ENCODE measurements at regions of chr19 and their contacts with region 1.

Region 1: DNA sequence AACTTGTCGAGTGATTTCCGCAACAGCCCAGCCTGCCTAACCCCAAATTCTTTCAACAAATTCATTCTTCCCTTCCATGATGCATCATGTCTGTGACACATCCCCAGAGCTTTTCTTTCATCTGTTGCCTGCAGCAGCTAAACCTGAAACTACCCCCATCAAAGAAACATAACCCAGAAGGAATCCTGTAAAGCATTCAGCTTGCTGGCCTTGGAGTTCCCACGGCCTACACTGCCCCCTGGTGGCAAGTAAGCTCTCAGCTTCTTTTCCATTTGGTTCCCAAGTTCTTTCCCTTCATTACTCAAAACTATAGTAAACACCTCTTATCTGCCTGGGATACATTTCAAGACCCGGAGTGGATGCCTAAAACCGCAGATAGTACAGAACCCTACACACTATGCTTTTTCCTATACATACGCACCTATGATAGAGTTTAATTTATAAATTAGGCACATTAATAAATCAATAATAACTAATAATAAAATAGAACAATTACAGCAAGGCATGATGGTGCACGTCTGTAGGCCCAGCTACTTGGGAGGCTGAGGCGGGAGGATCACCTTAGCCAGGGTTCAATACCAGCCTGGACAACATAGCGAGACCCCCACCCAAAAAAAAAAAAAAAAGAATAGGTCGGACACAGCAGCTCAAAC is 7.4 kb downstream of the ETHE1 start:
- DNase-seq: peak; percentile 64 to 85 (median 80)
- ATAC-seq: peak; percentile 97
- H3K4me3 ChIP-seq: no peak overlapping the region
- H3K4me3 Mint-ChIP-seq: peak overlapping the region in 8 of 10 donors; percentile 2 to 22 (median 6)
- H3K27ac ChIP-seq: no peak overlapping the region
- H3K27ac Mint-ChIP-seq: peak overlapping the region in 8 of 9 donors; percentile 10 to 87 (median 65)
- H3K4me1 ChIP-seq: peaks cover 4 to 5% of the 10 kb centered on the region in 2 donors
- H3K4me1 Mint-ChIP-seq: peaks cover 9 to 23% (median 18%) of the 10 kb centered on the region in 7 donors
- H3K27me3 ChIP-seq: no peaks in the 10 kb centered on the region
- H3K27me3 Mint-ChIP-seq: no peaks in the 10 kb centered on the region

Region 2: DNA sequence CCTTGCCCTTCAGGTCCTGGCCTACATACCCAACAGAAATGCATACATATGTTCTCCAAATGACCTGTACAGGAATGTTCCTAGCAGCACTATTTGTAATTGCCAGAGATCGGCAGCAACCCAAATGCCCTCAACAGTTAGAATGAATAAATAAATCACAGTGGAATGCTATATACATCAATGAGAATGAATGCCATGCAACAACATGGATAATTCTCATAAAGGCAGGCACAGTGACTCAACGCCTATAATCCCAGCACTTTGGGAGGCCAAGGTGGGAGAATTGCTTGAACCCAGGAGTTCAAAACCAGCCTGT is 86.2 kb before region 1 on chr19:
- CTCF ChIA-PET with region 1: interaction called, 102 read pairs
- POLR2A ChIA-PET with region 1: interaction called, 15 read pairs
- intact Hi-C with region 1: loop called (anchors 1 kb)
- DNase-seq: no peak
- ATAC-seq: no peak
- H3K4me3 ChIP-seq: no peak overlapping the region
- H3K4me3 Mint-ChIP-seq: peak overlapping the region in 1 of 10 donors; percentile 29
- H3K27ac ChIP-seq: no peak overlapping the region
- H3K27ac Mint-ChIP-seq: peak overlapping the region in 8 of 9 donors; percentile 10 to 89 (median 70)
- H3K4me1 ChIP-seq: peaks cover 14 to 27% of the 10 kb centered on the region in 2 donors
- H3K4me1 Mint-ChIP-seq: peaks cover 23 to 59% (median 46%) of the 10 kb centered on the region in 7 donors
- H3K27me3 ChIP-seq: no peaks in the 10 kb centered on the region
- H3K27me3 Mint-ChIP-seq: peaks cover 0 to 2% (median 0%) of the 10 kb centered on the region in 5 donors

Region 3: GRCh38 chr19:43446746-43447489 is 72.6 kb before region 1 on chr19:
- CTCF ChIA-PET with region 1: interaction called, 250 read pairs
- POLR2A ChIA-PET with region 1: interaction called, 36 read pairs
- intact Hi-C with region 1: loop called (anchors 1 kb)
- DNase-seq: peak; percentile 70 to 84 (median 78)
- ATAC-seq: peak; percentile 90
- H3K4me3 ChIP-seq: no peak overlapping the region
- H3K4me3 Mint-ChIP-seq: peak overlapping the region in 1 of 10 donors; percentile 13
- H3K27ac ChIP-seq: no peak overlapping the region
- H3K27ac Mint-ChIP-seq: peak overlapping the region in 8 of 9 donors; percentile 7 to 96 (median 86)
- H3K4me1 ChIP-seq: peaks cover 3 to 4% of the 10 kb centered on the region in 2 donors
- H3K4me1 Mint-ChIP-seq: peaks cover 23 to 46% (median 32%) of the 10 kb centered on the region in 7 donors
- H3K27me3 ChIP-seq: no peaks in the 10 kb centered on the region
- H3K27me3 Mint-ChIP-seq: peaks cover 0 to 2% (median 0%) of the 10 kb centered on the region in 5 donors

Region 4: GRCh38 chr19:43474986-43475705 is 44.4 kb before region 1 on chr19:
- CTCF ChIA-PET with region 1: interaction called, 6 read pairs
- POLR2A ChIA-PET with region 1: no interaction called
- intact Hi-C with region 1: loop called in 1 of 2 experiments (anchors 1 kb)
- DNase-seq: peak; percentile 95 to 99 (median 98)
- ATAC-seq: peak; percentile 93
- H3K4me3 ChIP-seq: peak overlapping the region; percentile 77
- H3K4me3 Mint-ChIP-seq: peak overlapping the region; percentile 75 to 93 (median 86)
- H3K27ac ChIP-seq: peak overlapping the region; percentile 92
- H3K27ac Mint-ChIP-seq: peak overlapping the region; percentile 93 to 100 (median 98)
- H3K4me1 ChIP-seq: peaks cover 9 to 30% of the 10 kb centered on the region in 2 donors
- H3K4me1 Mint-ChIP-seq: peaks cover 13 to 55% (median 41%) of the 10 kb centered on the region in 7 donors
- H3K27me3 ChIP-seq: no peaks in the 10 kb centered on the region
- H3K27me3 Mint-ChIP-seq: no peaks in the 10 kb centered on the region

Region 5: DNA sequence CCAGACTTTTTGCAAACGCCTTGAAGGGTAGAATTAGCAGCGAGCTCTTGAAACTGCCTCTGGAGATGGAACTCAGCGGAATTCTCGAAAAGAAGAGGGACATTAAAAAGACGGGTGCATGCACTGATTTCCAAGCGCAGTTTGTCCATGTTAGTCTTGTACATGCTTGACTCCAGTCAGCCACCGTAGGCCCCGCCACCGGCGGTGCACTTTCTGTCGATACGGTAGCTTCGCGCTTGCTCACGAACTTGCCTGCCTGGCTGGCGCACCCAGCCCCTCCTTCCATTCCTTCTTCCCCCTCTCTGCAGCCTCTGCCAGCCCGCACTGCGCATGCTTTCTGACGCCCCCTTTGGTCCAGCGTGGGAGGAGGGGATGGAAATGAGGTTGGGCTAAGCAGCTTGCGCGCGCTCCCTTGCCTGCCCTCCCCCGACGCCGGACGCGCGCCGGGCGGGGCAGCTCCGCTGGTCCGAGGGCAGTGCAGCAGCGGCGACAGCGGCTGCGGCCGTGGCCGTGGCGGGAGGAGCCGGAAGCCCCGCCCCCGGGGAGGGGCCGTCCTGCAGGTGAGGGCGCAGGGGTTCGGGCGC is 13.5 kb after region 1 on chr19 and contains the start of gene ZNF575:
- CTCF ChIA-PET with region 1: interaction called, 20 read pairs
- POLR2A ChIA-PET with region 1: interaction called, 8 read pairs
- intact Hi-C with region 1: no loop called
- DNase-seq: peak; percentile 61 to 91 (median 87)
- ATAC-seq: peak; percentile 64
- H3K4me3 ChIP-seq: peak within 1 kb of the TSS; percentile 98
- H3K4me3 Mint-ChIP-seq: peak within 1 kb of the TSS; percentile 88 to 98 (median 95)
- H3K27ac ChIP-seq: peak within 1 kb of the TSS; percentile 68
- H3K27ac Mint-ChIP-seq: peak within 1 kb of the TSS; percentile 90 to 98 (median 95)
- H3K4me1 ChIP-seq: peaks cover 12 to 14% of the 10 kb centered on the region in 2 donors
- H3K4me1 Mint-ChIP-seq: peaks cover 5 to 27% (median 18%) of the 10 kb centered on the region in 7 donors
- H3K27me3 ChIP-seq: no peaks in the 10 kb centered on the region
- H3K27me3 Mint-ChIP-seq: no peaks in the 10 kb centered on the region
- total RNA-seq, gene ZNF575: 4.5 to 10.7 (median 5.6) TPM